BJ (cell line): ENCODE measurements at regions of chr4 and their contacts with region 1.

Region 1: GRCh38 chr4:114807759-114808404 is 209.3 kb downstream of the UGT8 start:
- DNase-seq: no peak
- H3K4me3 ChIP-seq: no peak overlapping the region
- H3K27me3 ChIP-seq: no peaks in the 10 kb centered on the region
- CTCF ChIP-seq: peak; percentile 86

Region 2: GRCh38 chr4:114677346-114677979 is 130.4 kb before region 1 on chr4:
- CTCF ChIA-PET with region 1: no interaction called
- POLR2A ChIA-PET with region 1: no interaction called
- DNase-seq: no peak
- H3K4me3 ChIP-seq: no peak overlapping the region
- H3K27me3 ChIP-seq: no peaks in the 10 kb centered on the region
- CTCF ChIP-seq: no peak

Region 3: GRCh38 chr4:114791976-114792375 is 15.9 kb before region 1 on chr4:
- CTCF ChIA-PET with region 1: interaction called, 13 read pairs
- POLR2A ChIA-PET with region 1: no interaction called
- DNase-seq: no peak
- H3K4me3 ChIP-seq: no peak overlapping the region
- H3K27me3 ChIP-seq: no peaks in the 10 kb centered on the region
- CTCF ChIP-seq: no peak